Tibial artery (tissue), 4 donors: ENCODE measurements at regions of chr9 and their contacts with region 1.

Region 1: DNA sequence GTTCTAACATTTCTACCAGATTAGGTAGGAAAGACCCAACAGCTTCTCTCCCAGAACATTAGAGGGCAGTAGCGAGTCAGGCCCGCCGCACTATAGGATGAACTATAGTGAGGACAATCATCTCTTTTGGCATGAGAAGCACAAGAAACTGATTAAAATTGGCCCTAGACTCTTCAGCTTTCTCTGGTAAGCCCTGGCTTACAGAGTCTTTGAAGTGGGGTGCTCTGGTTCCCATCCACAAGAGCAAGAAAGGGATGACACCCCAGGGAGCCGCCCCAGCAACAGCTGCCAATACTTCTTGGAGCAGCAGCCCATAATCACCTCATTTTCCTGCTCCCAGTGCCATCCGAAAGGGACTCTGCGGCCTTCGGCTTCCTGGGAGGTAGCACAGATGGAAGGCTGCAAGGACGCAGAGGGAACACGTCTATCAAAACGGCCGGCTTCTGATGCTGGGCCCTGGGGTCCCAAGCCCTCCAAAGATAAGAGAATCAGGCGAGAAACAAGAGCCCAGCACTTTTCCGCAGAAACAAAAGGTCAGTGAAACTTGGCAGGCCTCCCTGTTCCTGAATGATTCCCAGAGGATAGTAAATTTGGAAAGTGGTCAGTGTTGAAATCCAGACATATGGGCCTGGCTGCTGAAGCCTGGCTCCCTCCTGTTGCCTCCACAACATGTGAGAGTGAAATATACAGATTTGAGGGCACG is 69.3 kb downstream of the HSD17B3 start:
- DNase-seq: peak; percentile 78 to 81
- H3K4me3 ChIP-seq: peak overlapping the region in 1 of 2 donors; percentile 21
- H3K27ac ChIP-seq: peak overlapping the region; percentile 61 to 65
- H3K4me1 ChIP-seq: peaks cover 4 to 13% (median 10%) of the 10 kb centered on the region in 4 donors
- H3K27me3 ChIP-seq: no peaks in the 10 kb centered on the region
- CTCF ChIP-seq: peak; percentile 76 to 95

Region 2: GRCh38 chr9:96305171-96305570 is 72.5 kb after region 1 on chr9:
- intact Hi-C with region 1: loop called (anchors 5 kb)
- DNase-seq: no peak
- H3K4me3 ChIP-seq: no peak overlapping the region
- H3K27ac ChIP-seq: no peak overlapping the region
- H3K4me1 ChIP-seq: no peaks in the 10 kb centered on the region
- H3K27me3 ChIP-seq: no peaks in the 10 kb centered on the region
- CTCF ChIP-seq: no peak

Region 3: GRCh38 chr9:96317335-96317980 is 84.8 kb after region 1 on chr9:
- intact Hi-C with region 1: loop called (anchors 5 kb)
- DNase-seq: peak; percentile 27 to 69
- H3K4me3 ChIP-seq: no peak overlapping the region
- H3K27ac ChIP-seq: no peak overlapping the region
- H3K4me1 ChIP-seq: no peaks in the 10 kb centered on the region
- H3K27me3 ChIP-seq: no peaks in the 10 kb centered on the region
- CTCF ChIP-seq: peak; percentile 76 to 88

Region 4: GRCh38 chr9:97570899-97571298 is 1338.2 kb after region 1 on chr9:
- intact Hi-C with region 1: no loop called
- DNase-seq: no peak
- H3K4me3 ChIP-seq: no peak overlapping the region
- H3K27ac ChIP-seq: peak overlapping the region in 1 of 2 donors; percentile 51
- H3K4me1 ChIP-seq: peaks cover 0 to 35% (median 0%) of the 10 kb centered on the region in 4 donors
- H3K27me3 ChIP-seq: no peaks in the 10 kb centered on the region
- CTCF ChIP-seq: no peak